ENCODE measurements at regions of chr16 and their contacts with region 1.

Region 1: DNA sequence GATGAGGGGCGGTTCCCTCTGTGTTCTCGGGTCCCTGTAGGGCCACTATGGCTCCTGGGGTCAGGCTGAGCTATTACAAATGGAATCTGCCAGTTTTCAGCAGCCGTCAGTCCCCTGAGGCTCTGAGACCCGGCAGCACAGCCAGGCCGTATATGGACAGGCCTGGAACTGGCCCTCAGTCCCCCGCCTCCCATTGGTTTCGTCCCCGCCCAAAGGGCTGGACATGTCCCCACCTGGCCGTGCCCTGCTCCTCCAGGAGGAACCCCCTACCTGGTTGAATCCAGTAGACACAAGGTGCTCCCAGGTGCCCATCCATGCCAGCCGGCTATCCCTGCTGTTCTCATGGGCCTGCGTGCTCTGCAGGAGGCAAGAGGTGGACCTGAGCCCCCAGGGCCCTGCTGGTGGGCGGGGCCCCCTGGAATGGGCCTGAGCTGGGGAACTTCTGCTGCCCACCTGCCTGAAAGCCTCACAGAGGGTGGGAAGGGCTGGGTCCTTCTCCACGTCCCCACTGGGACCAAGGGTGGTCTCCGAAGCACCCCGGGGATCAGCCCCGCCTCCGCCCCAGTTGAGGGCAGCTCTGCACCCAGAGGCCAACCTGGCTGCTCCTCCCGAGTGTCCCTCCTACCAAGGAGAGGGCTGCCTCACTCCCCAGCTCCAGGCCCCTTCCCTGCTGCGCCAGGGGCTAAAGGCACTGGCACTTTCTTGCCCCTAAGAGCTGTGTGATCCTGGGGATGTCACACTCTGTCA is 16.8 kb downstream of the VASN start:
- DNase-seq: peak; percentile 60 to 77 (median 75)
- ATAC-seq: peak in 3 of 4 donors; percentile 11 to 50 (median 36)
- H3K4me3 ChIP-seq: no peak overlapping the region
- H3K27ac ChIP-seq: peak overlapping the region; percentile 15 to 91 (median 70)
- H3K4me1 ChIP-seq: peaks cover 0 to 75% (median 31%) of the 10 kb centered on the region in 12 donors
- H3K27me3 ChIP-seq: no peaks in the 10 kb centered on the region
- CTCF ChIP-seq: no peak
- POLR2A ChIP-seq: no peak

Region 2: GRCh38 chr16:4330277-4330874 is 58.1 kb before region 1 on chr16:
- intact Hi-C with region 1: no loop called
- DNase-seq: peak; percentile 84 to 93 (median 85)
- ATAC-seq: peak; percentile 52 to 66 (median 60)
- H3K4me3 ChIP-seq: no peak overlapping the region
- H3K27ac ChIP-seq: peak overlapping the region in 7 of 12 donors; percentile 80 to 98 (median 95)
- H3K4me1 ChIP-seq: peaks cover 6 to 54% (median 41%) of the 10 kb centered on the region in 12 donors
- H3K27me3 ChIP-seq: no peaks in the 10 kb centered on the region
- CTCF ChIP-seq: peak; percentile 95 to 100 (median 97)
- POLR2A ChIP-seq: no peak

Region 3: DNA sequence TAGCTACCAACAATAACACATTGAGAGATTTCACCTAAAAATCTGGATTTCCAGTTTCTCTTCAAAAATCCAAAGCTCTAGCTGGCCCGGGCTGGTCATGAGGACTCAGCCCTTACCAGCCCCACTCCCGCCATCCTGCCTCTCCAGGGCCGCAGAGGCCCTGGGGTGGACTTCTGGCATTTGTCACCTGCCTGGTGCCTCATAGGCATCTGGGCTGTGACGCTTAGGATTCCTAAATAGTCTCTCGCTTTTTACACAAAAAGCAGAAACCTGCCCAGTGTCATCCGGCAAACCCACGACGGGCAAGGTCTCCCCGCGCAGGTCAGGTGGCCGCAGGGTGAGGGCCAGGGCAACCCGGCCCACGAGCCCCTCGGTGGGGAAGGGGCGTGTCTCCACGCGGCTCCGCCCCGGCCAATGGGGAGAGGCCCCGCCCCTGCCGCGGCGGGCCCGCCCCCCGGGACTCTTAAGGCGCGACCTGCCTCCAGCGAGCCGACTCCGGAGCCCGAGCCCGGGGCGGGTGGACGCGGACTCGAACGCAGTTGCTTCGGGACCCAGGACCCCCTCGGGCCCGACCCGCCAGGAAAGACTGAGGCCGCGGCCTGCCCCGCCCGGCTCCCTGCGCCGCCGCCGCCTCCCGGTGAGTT is 17.0 kb before region 1 on chr16 and contains the start of gene VASN:
- intact Hi-C with region 1: loop called in 1 of 10 experiments (anchors 2 kb)
- DNase-seq: peak; percentile 82 to 91 (median 85)
- ATAC-seq: peak; percentile 55 to 82 (median 80)
- H3K4me3 ChIP-seq: peak within 1 kb of the TSS; percentile 34 to 86 (median 64)
- H3K27ac ChIP-seq: peak within 1 kb of the TSS in 11 of 12 donors; percentile 73 to 89 (median 83)
- H3K4me1 ChIP-seq: peaks cover 0 to 78% (median 54%) of the 10 kb centered on the region in 12 donors
- H3K27me3 ChIP-seq: no peaks in the 10 kb centered on the region
- CTCF ChIP-seq: no peak
- POLR2A ChIP-seq: peak; percentile 89 to 99
- total RNA-seq, gene VASN: 3.8 to 20.0 (median 6.2) TPM